ENCODE measurements at regions of chr2 and their contacts with region 1.

Region 1: GRCh38 chr2:177832444-177833433 is 239.8 kb downstream of the PDE11A start:
- DNase-seq: no peak
- H3K4me3 ChIP-seq: no peak overlapping the region
- H3K27ac ChIP-seq: no peak overlapping the region
- H3K4me1 ChIP-seq: no peaks in the 10 kb centered on the region
- H3K27me3 ChIP-seq: no peaks in the 10 kb centered on the region
- CTCF ChIP-seq: no peak
- EP300 ChIP-seq: no peak
- POLR2A ChIP-seq: no peak
- RAD21 ChIP-seq: no peak

Region 2: GRCh38 chr2:177717831-177718618 is 114.7 kb before region 1 on chr2:
- CTCF ChIA-PET with region 1: no interaction called
- POLR2A ChIA-PET with region 1: no interaction called
- DNase-seq: no peak
- H3K4me3 ChIP-seq: no peak overlapping the region
- H3K27ac ChIP-seq: no peak overlapping the region
- H3K4me1 ChIP-seq: no peaks in the 10 kb centered on the region
- H3K27me3 ChIP-seq: peaks cover 0 to 1% (median 0%) of the 10 kb centered on the region in 4 experiments; a peak in 3 of 7 replicates
- CTCF ChIP-seq: no peak
- EP300 ChIP-seq: no peak
- POLR2A ChIP-seq: no peak
- RAD21 ChIP-seq: no peak

Region 3: DNA sequence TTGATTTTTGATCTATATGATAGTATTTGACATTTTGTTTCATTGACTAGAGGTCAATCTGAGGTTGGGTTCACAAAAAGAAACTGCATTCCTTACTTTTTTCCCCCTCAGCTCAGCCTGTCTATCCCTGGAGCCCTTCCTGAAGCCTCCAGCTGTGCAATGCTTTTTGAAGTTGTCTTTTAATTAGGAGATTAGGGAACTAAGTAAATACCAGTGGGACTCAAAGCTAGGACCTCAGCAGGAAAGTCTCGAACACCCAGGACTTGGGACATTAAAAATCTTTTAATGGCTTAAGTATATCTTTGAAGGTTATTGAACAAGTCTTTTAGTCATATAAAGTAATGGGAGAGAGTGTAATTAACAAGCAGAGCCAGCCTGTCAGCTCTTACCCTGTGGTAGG is 19.6 kb after region 1 on chr2:
- CTCF ChIA-PET with region 1: interaction called, 10 read pairs
- POLR2A ChIA-PET with region 1: no interaction called
- DNase-seq: no peak
- H3K4me3 ChIP-seq: no peak overlapping the region
- H3K27ac ChIP-seq: no peak overlapping the region
- H3K4me1 ChIP-seq: no peaks in the 10 kb centered on the region
- H3K27me3 ChIP-seq: 0 out of 7 replicates have a peak, but pooled peaks cover 0 to 2% (median 0%) of the 10 kb centered on the region in 4 experiments
- CTCF ChIP-seq: no peak
- EP300 ChIP-seq: no peak
- POLR2A ChIP-seq: no peak
- RAD21 ChIP-seq: no peak